HAP-1 (cell line): ENCODE measurements at regions of chr19 and their contacts with region 1.

Region 1: DNA sequence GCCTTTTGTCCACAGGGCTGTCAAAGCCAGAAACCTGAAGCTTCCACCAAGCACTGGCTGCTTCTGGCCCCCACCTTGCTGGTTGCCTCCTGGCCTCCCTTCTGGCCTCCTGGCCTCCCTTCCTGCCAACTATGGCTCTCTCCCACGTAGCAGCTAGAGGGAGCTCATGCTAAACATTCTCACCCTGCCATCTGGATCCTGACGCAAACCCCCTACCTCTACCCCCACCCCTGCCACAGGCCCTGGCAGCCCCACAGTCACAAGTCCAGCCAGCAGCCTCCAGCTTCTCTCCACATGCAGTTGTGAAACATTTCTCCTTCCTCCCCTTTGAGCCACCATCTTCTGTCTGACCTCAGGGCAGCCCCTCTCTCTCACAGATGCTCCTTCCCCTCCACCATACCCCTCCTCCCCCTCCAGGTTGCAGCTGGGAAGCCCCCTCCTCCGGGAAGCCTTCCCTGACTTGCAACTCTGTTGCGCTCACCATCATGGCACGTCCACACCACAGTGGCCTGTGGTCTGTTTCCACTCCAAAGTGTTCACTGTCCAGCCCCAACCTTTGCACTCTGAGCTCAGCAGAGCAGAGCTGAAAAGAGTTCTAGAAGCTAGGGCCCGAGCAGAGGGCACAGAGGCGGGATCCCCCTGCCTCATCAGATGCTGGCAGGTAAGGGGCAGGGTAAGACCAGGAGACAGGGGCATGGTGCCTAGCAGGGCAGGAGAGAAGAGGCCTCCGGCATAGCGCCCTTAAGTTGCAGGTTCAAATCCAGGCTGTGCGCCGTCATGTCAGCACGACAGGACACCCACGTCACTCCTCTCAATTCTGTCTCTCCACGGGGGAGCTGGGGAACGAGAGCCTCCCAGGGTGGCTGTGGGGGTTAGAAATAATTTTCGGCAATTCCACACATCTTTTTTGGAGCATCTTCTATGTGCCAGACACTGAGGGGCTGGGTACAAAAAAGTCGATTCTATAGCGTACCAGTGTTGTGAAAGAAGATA is 7.3 kb downstream of the ADGRL1 start:
- DNase-seq: no peak
- H3K4me3 ChIP-seq: no peak overlapping the region
- H3K4me1 ChIP-seq: no peaks in the 10 kb centered on the region
- H3K27me3 ChIP-seq: no peaks in the 10 kb centered on the region

Region 2: DNA sequence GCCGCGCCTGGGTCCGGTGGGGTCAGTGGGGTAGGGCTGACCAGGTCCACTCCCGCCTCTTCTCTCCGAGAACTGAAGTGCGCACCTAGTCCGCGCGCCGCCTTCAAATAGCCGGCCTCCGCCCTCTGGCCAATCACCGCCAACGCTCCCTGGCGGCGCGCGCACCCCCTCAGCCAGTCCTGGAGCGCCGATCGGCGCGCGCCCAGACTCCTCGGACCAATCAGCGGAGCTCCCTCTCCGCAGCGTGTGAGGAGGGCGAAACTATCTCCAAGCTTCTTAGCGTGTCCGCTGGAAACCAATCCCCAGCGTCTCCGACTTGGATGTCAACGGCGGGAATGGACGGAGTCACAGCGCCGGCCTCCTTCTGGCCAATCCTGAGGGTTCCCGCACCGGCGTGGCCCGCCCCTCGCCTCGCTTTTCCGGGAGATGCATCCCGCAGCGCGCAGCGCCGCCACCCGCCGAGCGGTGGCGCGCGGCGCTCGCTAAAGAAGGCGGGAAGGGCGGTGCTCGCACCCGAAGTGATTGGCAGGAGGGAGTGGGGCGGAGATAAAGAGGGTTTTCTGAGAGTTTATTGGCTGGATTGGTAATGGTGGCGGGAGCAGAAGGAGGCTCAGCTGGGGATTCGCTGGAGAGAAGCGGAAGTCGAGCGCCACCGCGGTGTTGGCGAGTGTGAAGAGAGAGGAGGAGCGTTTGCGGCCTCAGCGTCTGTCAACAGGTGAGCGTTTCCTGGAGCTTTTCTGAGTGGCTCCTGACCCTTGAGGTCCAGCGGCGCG is 62.0 kb before region 1 on chr19 and contains the start of gene ASF1B:
- in situ Hi-C with region 1: no loop called
- DNase-seq: peak; percentile 99
- H3K4me3 ChIP-seq: peak within 1 kb of the TSS; percentile 75
- H3K4me1 ChIP-seq: peaks cover 26% of the 10 kb centered on the region
- H3K27me3 ChIP-seq: no peaks in the 10 kb centered on the region

Region 3: GRCh38 chr19:14265290-14266036 is 66.8 kb after region 1 on chr19:
- in situ Hi-C with region 1: no loop called
- DNase-seq: peak in 1 of 2 experiments; percentile 15
- H3K4me3 ChIP-seq: no peak overlapping the region
- H3K4me1 ChIP-seq: no peaks in the 10 kb centered on the region
- H3K27me3 ChIP-seq: no peaks in the 10 kb centered on the region

Region 4: GRCh38 chr19:14347999-14348889 is 149.6 kb after region 1 on chr19:
- in situ Hi-C with region 1: loop called (anchors 5 kb)
- DNase-seq: peak; percentile 60 to 84
- H3K4me3 ChIP-seq: peak overlapping the region; percentile 8
- H3K4me1 ChIP-seq: peaks cover 3% of the 10 kb centered on the region; the same call in 1 of the 2 replicates
- H3K27me3 ChIP-seq: no peaks in the 10 kb centered on the region

Region 5: GRCh38 chr19:14405758-14406644 is 207.3 kb after region 1 on chr19:
- in situ Hi-C with region 1: loop called (anchors 10 kb)
- DNase-seq: peak; percentile 80 to 97
- H3K4me3 ChIP-seq: no peak overlapping the region
- H3K4me1 ChIP-seq: no peaks in the 10 kb centered on the region
- H3K27me3 ChIP-seq: no peaks in the 10 kb centered on the region